Heart left ventricle (tissue), 16 donors: ENCODE measurements at regions of chr1 and their contacts with region 1.

Region 1: GRCh38 chr1:239262538-239262937 is 123.8 kb upstream of the CHRM3 start:
- DNase-seq: no peak
- ATAC-seq: no peak
- H3K4me3 ChIP-seq: no peak overlapping the region
- H3K27ac ChIP-seq: no peak overlapping the region
- H3K4me1 ChIP-seq: no peaks in the 10 kb centered on the region
- H3K27me3 ChIP-seq: no peaks in the 10 kb centered on the region
- CTCF ChIP-seq: no peak
- POLR2A ChIP-seq: no peak

Region 2: DNA sequence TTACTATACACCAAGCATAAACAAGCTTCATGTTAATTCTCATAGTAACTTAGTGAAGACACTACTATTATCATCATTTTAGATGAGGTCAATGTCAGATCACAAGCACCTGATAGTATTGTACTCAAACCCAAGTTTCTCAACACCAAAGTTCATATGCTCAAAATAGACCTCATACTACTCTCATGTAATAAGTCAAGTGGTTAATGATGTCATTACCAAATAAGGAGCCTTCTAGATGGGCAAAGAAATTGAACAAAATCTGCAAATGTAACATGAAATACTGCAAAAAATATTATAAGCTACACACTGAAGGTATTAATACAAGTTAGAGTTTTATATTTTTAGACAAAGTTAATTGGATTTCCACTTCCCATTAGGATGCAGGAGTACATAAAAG is 20.1 kb before region 1 on chr1:
- intact Hi-C with region 1: loop called in 1 of 10 experiments (anchors 1 kb)
- DNase-seq: no peak
- ATAC-seq: no peak
- H3K4me3 ChIP-seq: no peak overlapping the region
- H3K27ac ChIP-seq: no peak overlapping the region
- H3K4me1 ChIP-seq: no peaks in the 10 kb centered on the region
- H3K27me3 ChIP-seq: no peaks in the 10 kb centered on the region
- CTCF ChIP-seq: no peak
- POLR2A ChIP-seq: no peak